ENCODE measurements at regions of chr12 and their contacts with region 1.

Region 1: DNA sequence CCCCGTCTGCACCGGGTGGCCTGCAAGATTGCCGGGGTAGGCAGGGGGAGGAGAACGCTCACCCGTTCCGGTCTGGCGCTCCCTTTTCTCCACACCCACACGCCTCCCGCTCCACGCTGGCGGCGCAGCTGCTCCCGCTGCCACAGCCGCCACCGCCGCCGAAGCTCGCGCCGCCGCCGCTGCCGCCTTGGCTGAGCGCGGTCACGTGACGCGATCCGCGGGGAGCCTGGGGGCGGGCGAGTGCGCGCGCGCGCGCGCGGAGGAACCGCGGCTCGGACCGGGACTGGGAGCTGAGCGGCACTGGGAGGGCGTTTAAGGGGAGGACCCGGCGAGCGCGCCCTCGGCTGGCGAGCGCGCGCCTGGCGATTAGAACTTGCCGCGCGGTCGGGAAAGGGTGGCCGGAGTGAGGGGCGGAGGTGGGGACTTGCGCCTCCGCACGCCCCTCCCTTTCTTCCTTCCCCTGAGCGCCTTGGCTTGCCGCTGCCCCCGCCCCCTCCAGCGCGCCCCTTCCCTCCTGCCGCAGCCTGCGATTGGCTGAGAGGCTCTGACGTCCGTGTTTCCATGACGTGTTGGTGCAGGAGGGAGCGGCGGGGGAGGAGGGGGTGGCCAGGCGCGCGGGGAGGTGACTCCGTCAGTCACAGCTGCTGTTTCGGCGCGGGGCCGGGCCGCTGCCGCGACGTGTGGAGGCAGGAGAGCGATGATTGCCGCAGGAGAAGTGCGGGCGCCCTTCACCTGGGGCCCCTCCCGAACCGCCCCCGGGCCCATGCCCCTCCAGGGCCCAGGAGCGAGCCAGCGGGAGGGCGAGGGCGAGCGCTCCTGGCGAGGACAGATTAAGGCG is 738 bp upstream of the ATP2B1 start:
- DNase-seq: peak; percentile 94

Region 2: GRCh38 chr12:89698607-89699006 is 10.8 kb before region 1 on chr12:
- CTCF ChIA-PET with region 1: no interaction called
- POLR2A ChIA-PET with region 1: interaction called, 12 read pairs
- DNase-seq: no peak

Region 3: DNA sequence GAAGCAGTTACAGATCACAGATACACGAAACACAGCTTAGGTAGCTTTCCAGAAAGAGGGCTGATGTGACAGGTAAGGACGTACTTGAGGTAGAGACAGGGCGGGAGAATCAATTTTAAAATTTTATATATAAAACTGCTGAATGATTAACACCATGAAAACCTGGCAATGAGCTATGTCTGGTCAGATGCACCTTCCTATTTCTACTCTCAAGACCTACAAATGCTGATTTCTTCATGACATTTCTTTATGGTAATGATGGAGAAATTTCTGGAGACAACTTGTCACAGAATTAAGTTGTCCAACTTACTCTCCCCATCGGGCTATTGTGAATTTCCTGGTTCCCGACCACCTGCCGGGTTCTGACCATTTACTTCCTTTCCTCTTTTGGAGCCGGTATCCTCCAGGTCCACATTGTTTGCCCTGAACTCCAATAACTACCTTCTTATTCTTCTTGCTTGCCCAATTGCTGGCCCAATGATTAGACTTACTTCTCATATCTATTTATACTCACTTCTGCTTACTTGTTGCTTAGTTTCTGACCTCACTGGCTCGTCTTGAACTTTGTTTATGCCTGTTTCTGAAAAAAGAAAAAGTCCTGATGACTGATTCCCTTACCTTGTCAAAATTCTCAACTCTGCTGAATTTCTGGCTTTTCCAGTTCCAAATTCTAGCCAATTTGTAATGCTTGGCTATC is 12.1 kb after region 1 on chr12:
- CTCF ChIA-PET with region 1: no interaction called
- POLR2A ChIA-PET with region 1: no interaction called
- DNase-seq: no peak

Region 4: DNA sequence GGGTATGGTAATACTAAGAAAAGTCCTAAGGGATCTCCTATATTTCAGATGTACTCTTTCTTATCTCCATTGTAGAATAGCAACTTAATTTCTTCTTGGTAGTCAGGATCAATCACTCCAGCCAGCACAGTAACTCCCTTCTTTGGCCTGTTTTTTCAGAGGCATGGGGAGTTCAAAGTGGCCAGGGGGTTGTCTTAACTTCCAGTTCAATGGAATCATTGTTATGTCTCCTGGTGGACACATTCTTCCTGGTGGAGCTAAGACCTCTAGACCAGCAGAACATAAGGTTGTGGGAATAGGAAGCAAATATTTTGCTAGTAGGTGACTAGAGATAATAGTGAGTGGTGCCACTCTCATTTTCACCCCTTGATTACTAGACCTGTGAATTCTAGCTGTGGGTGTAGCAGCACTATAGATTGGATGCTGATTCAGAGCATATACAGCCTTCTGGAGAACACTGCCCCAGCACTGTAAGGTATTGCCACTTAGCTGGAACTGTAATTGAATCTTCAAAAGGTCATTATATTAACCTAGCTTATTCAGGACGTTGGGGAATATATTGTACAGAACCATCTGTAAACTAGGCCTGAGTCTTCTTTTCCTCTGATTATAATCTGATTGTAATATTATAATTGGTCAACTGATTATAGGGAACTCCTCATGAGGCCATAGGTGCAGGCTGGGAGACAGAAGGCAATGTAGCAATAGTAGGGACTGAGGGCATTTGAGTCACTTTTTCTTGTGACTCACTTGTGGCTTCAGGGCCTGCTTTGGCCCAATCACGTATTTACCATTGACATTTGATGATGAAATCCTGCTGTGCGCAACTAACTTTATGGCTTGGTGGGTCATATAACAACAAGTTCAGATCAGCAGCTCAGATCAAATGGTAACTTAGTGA is 59.5 kb after region 1 on chr12:
- CTCF ChIA-PET with region 1: no interaction called
- POLR2A ChIA-PET with region 1: interaction called, 12 read pairs
- DNase-seq: peak; percentile 51

Measured in HEK293T (cell line).